ENCODE measurements at regions of chr9 and their contacts with region 1.

Region 1: DNA sequence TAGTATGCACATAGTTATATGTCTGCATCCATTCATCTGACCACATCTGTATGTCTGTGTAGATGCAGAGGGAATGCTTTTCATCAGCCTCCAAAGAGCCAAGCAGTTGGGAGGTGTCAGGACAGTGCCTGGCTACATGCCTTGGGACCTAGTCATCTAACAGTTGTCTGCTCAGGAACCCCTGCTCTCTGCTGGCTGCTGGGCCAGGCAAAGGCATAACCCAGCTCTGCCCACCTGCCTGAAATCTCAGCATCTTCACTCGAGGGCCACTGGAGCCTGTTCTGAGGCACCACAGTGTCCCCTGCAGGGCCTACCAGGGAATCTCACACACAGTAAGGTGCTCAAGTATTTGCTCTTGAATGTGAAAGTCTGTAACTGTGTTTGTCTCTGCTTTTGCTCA is 3.7 kb downstream of the C9orf50 start:
- DNase-seq: no peak
- ATAC-seq: peak; percentile 34
- H3K4me3 ChIP-seq: no peak overlapping the region
- H3K27ac ChIP-seq: no peak overlapping the region
- H3K4me1 ChIP-seq: peaks cover 7% of the 10 kb centered on the region
- H3K27me3 ChIP-seq: peaks cover 11% of the 10 kb centered on the region
- CTCF ChIP-seq: peak; percentile 25

Region 2: GRCh38 chr9:129139993-129140396 is 477.2 kb before region 1 on chr9:
- intact Hi-C with region 1: loop called (anchors 5 kb)
- DNase-seq: peak; percentile 88
- ATAC-seq: peak; percentile 80
- H3K4me3 ChIP-seq: peak overlapping the region; percentile 61
- H3K27ac ChIP-seq: peak overlapping the region; percentile 100
- H3K4me1 ChIP-seq: peaks cover 76% of the 10 kb centered on the region
- H3K27me3 ChIP-seq: no peaks in the 10 kb centered on the region
- CTCF ChIP-seq: no peak

Measured in upper lobe of right lung (tissue), 1 donor.